PC-9 (cell line): ENCODE measurements at regions of chr10 and their contacts with region 1.

Region 1: GRCh38 chr10:99435986-99436638 is 5.7 kb upstream of the GOT1 start:
- DNase-seq: peak in 1 of 2 experiments; percentile 40
- H3K4me3 ChIP-seq: no peak overlapping the region
- H3K27ac ChIP-seq: no peak overlapping the region
- H3K4me1 ChIP-seq: no peaks in the 10 kb centered on the region
- H3K27me3 ChIP-seq: no peaks in the 10 kb centered on the region
- CTCF ChIP-seq: peak; percentile 68

Region 2: DNA sequence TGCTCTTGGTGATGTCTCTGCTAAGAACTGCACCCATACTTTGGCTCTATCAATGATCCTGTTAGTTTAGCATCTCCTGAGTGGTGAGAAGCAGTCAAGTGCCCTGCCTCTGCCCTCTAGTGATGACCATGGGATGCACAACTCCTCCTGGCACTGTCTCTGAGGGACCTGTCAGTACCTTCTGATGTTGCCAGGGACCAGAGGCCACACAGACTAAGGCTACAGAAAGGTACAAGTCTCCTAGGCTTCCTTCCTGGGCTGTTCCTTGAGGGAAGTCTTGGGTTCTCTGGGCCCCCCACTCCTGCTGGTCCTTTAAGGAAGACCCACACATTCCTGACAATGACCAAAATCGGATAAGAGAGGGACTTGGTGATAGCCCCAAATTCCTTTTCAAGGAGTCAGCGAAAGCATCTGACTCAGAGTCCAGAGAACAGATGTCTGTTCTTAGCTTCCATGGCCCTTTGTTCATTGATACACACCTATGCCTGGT is 112.0 kb after region 1 on chr10:
- CTCF ChIA-PET with region 1: no interaction called
- POLR2A ChIA-PET with region 1: no interaction called
- intact Hi-C with region 1: loop called (anchors 5 kb)
- DNase-seq: peak in 1 of 2 experiments; percentile 39
- H3K4me3 ChIP-seq: no peak overlapping the region
- H3K27ac ChIP-seq: no peak overlapping the region
- H3K4me1 ChIP-seq: no peaks in the 10 kb centered on the region
- H3K27me3 ChIP-seq: no peaks in the 10 kb centered on the region
- CTCF ChIP-seq: peak; percentile 36; the same call in 1 of the 2 replicates

Region 3: GRCh38 chr10:99560277-99561126 is 124.4 kb after region 1 on chr10:
- CTCF ChIA-PET with region 1: no interaction called
- POLR2A ChIA-PET with region 1: no interaction called
- intact Hi-C with region 1: loop called (anchors 5 kb)
- DNase-seq: peak in 1 of 2 experiments; percentile 22
- H3K4me3 ChIP-seq: no peak overlapping the region
- H3K27ac ChIP-seq: no peak overlapping the region
- H3K4me1 ChIP-seq: no peaks in the 10 kb centered on the region
- H3K27me3 ChIP-seq: no peaks in the 10 kb centered on the region
- CTCF ChIP-seq: peak; percentile 82

Region 4: GRCh38 chr10:99612167-99612831 is 176.2 kb after region 1 on chr10:
- CTCF ChIA-PET with region 1: interaction called, 3 read pairs
- POLR2A ChIA-PET with region 1: no interaction called
- intact Hi-C with region 1: loop called (anchors 1 kb)
- DNase-seq: peak; percentile 25 to 55
- H3K4me3 ChIP-seq: no peak overlapping the region
- H3K27ac ChIP-seq: no peak overlapping the region
- H3K4me1 ChIP-seq: no peaks in the 10 kb centered on the region
- H3K27me3 ChIP-seq: no peaks in the 10 kb centered on the region
- CTCF ChIP-seq: peak; percentile 80

Region 5: GRCh38 chr10:99711129-99711719 is 275.1 kb after region 1 on chr10:
- CTCF ChIA-PET with region 1: no interaction called
- POLR2A ChIA-PET with region 1: no interaction called
- intact Hi-C with region 1: loop called (anchors 5 kb)
- DNase-seq: peak in 1 of 2 experiments; percentile 10
- H3K4me3 ChIP-seq: no peak overlapping the region
- H3K27ac ChIP-seq: no peak overlapping the region
- H3K4me1 ChIP-seq: no peaks in the 10 kb centered on the region
- H3K27me3 ChIP-seq: no peaks in the 10 kb centered on the region
- CTCF ChIP-seq: peak; percentile 67; the same call in 1 of the 2 replicates